AG04449 (cell line): ENCODE measurements at regions of chr14 and their contacts with region 1.

Region 1: DNA sequence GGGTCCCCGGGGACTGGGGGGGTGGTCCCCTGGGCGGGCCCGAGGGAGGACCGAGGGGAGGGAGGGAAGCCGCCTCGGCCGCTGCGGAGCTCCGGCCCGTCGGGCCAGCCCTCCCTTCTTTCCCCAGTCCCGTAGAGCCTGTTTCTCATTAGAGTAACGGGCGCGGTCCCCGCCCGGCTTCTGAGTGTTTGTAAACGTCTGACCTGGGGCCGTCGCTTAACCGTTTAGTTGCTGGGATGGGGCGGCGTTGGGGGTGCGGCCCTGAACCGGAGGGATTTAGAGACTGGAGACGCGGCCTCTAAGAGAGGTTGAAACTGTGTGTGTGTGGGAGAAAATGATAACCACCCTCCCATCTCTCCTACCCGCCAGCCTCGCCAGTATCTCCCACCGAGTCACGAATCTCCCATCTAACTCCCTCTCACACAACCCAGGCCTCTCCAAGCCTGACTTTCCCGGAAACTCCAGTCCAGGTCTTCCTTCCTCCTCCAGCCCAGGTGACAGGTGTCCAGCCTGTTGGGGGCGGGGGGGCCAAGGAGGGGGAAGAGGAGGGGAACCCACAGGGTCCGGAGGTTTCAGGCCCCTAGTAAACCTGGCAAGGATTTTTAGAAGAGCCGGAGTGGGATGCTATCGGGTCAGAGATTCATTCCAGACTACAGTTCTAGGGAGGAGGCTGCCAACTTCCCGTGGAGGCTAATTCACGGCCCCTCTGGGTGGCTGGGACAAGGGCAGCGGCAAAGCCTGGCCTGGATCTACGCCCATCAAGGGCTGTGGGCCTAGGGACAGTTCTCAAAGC is 1.1 kb upstream of the NFATC4 start:
- DNase-seq: peak; percentile 81
- H3K4me3 ChIP-seq: peak overlapping the region; percentile 59
- CTCF ChIP-seq: no peak

Region 2: GRCh38 chr14:24241829-24242443 is 125.0 kb before region 1 on chr14:
- CTCF ChIA-PET with region 1: no interaction called
- POLR2A ChIA-PET with region 1: no interaction called
- DNase-seq: no peak
- H3K4me3 ChIP-seq: peak overlapping the region; percentile 91
- CTCF ChIP-seq: peak; percentile 65

Region 3: DNA sequence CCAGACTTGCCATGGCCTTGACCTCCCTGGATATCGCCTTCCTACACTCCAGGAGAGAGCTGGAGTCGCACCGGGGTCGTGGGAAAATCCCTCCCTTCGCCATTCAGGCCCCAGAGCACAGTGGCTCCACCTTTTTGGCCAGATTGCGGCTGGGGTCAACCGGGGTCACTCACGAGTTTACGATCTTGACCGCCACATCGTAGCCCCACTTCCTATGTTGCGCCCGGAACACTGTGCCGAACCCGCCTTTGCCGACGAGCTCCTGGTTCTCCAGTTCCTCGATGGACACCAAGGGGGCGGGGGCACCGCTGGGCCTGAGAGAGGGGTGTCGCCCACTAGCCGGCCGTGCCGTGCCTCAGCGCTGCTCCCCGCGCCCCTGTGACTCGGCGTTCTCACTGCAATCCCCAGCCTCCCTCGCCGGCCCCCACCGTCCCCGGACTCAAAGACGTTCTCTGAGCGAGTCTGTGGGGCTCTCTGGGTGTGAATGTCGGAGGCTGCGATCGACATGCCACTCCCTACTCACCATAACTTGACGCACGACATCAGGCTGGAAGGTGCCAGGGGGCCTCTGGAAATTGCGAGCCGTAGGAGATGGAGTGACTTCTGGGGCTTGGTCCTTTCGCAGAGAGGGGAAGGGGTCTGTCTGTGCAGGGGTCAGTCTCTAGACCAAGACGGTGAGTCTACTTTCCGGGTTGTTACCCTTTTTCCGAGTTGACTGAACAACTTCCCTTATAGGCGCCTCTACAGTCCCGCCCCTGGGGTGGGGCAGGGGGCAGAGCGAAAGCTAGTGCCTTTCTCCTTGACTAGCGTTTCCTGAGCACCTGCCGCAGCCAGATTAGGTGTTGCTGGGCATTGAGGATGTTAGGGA is 27.4 kb before region 1 on chr14 and contains the start of gene RIPK3:
- CTCF ChIA-PET with region 1: interaction called, 79 read pairs
- POLR2A ChIA-PET with region 1: no interaction called
- DNase-seq: no peak
- H3K4me3 ChIP-seq: peak within 1 kb of the TSS; percentile 41
- CTCF ChIP-seq: no peak

Region 4: GRCh38 chr14:24351517-24351916 is 15.4 kb before region 1 on chr14:
- CTCF ChIA-PET with region 1: interaction called, 18 read pairs
- POLR2A ChIA-PET with region 1: interaction called, 7 read pairs
- DNase-seq: no peak
- H3K4me3 ChIP-seq: no peak overlapping the region
- CTCF ChIP-seq: no peak

Region 5: DNA sequence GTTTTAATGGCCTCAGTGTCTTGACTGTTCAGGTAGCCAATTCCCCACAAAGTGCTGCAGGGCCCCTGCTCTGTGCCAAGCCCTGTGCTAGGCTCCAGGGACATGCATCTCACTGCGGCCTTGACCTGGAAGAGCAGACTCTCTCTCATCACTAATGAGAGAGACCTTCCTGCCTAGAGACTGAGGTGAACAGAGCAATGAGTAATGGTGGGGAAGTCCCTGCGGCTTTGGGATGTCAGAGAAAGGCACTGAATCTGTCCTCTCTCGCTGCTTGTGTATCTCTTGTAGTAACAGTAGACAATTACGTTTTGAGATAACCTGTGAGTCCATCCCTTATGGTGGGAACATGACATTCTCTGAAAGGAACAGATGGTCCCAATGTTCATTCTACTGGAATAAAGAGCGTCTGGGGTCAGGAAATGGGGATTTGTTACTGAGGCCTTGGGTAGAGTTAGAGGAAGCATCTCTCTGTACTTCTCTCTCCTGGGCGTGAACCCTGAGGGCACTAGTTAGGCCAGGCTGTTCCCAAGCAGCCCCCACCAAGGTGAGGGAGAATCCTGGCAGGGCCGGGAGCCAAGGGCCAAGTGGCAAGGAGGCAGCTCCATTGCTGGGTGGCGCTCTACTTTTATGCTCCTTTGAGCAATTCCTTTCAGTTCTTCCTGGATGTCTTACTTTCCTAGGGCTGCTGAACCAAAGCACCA is 14.6 kb after region 1 on chr14:
- CTCF ChIA-PET with region 1: interaction called, 19 read pairs
- POLR2A ChIA-PET with region 1: interaction called, 26 read pairs
- DNase-seq: no peak
- H3K4me3 ChIP-seq: no peak overlapping the region
- CTCF ChIP-seq: no peak

Region 6: GRCh38 chr14:24398653-24399446 is 31.9 kb after region 1 on chr14 and contains the start of gene NYNRIN:
- CTCF ChIA-PET with region 1: interaction called, 12 read pairs
- POLR2A ChIA-PET with region 1: no interaction called
- DNase-seq: no peak
- H3K4me3 ChIP-seq: peak within 1 kb of the TSS; percentile 69
- CTCF ChIP-seq: no peak

Region 7: GRCh38 chr14:24425704-24426103 is 58.8 kb after region 1 on chr14:
- CTCF ChIA-PET with region 1: interaction called, 83 read pairs
- POLR2A ChIA-PET with region 1: interaction called, 32 read pairs
- DNase-seq: no peak
- H3K4me3 ChIP-seq: no peak overlapping the region
- CTCF ChIP-seq: no peak